ENCODE measurements at regions of chr6 and their contacts with region 1.

Region 1: DNA sequence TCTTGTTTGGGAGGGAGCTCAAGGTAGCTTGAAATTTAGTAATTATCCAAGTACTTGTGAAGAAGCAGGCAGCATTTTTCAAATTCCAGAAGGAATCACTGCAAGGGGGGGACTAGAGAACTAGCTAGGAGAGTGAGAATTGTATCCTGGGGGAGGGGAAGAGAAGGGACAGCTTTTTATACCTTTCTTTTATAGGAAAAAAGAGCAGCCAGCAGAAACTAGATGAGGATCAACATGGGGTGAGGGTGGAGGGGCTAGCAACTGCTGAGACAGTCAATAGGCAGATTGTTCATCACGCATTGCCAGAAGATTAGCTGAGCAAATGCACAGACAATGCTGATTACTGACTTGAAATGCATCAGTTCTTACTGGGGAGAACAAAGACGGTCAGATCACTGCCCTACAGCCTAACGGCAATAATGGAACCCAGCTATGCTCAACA is 514.3 kb upstream of the CITED2 start:
- DNase-seq: no peak
- H3K4me3 ChIP-seq: no peak overlapping the region
- H3K4me3 Mint-ChIP-seq: peak overlapping the region; percentile 12
- H3K27ac Mint-ChIP-seq: peak overlapping the region; percentile 6
- H3K4me1 ChIP-seq: peaks cover 35% of the 10 kb centered on the region
- H3K4me1 Mint-ChIP-seq: peaks cover 14% of the 10 kb centered on the region
- H3K27me3 ChIP-seq: no peaks in the 10 kb centered on the region
- H3K27me3 Mint-ChIP-seq: no peaks in the 10 kb centered on the region
- CTCF ChIP-seq: no peak

Region 2: DNA sequence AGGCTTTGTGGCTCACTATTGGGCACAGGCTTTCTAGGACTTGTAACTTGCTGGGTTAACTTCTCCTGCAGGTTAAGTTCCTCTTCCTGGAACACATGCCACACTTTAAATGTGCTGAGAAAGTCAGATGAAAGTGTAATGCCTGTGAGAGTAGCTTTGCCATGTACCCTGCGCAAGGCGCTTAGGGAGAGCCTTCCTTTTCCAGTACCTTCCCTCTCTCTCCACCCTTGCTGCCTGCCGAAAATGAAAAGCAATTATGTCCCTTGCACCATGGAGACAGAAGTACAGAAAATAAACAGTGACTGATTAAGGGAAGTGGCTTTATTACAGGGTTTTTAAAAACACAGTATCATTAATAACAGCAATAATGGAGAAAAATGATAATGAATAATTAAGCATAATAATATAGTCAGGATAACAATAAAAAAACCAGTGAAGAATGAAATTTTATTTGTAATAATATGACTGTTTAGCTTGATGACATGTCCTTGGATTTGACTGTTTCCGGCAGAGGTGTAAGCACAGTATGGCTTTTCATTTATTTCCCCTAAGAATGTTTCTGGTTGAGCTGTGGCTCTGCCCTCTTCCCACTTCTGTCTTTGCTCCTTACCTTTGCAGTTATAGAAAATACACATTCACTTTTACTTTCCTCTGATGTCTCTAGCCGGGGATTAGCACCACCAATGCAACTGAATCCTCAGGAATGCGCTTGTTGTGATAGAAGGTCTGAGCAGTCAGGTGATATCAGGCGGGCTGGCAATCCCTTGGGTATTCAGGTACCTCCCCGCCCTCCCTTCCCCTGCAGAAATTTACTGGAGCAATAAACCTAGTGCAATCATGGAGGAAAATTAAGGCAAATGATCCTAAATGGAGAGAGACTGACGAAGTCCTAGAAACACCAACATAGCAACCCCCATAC is 41.9 kb before region 1 on chr6:
- CTCF ChIA-PET with region 1: no interaction called
- POLR2A ChIA-PET with region 1: no interaction called
- intact Hi-C with region 1: no loop called
- DNase-seq: peak; percentile 62 to 65
- H3K4me3 ChIP-seq: no peak overlapping the region
- H3K4me3 Mint-ChIP-seq: peak overlapping the region; percentile 8
- H3K27ac Mint-ChIP-seq: peak overlapping the region; percentile 29
- H3K4me1 ChIP-seq: peaks cover 27% of the 10 kb centered on the region
- H3K4me1 Mint-ChIP-seq: peaks cover 20% of the 10 kb centered on the region
- H3K27me3 ChIP-seq: no peaks in the 10 kb centered on the region
- H3K27me3 Mint-ChIP-seq: no peaks in the 10 kb centered on the region
- CTCF ChIP-seq: no peak

Region 3: GRCh38 chr6:139863346-139863745 is 25.4 kb before region 1 on chr6:
- CTCF ChIA-PET with region 1: no interaction called
- POLR2A ChIA-PET with region 1: no interaction called
- intact Hi-C with region 1: loop called (anchors 1 kb)
- DNase-seq: no peak
- H3K4me3 ChIP-seq: no peak overlapping the region
- H3K4me3 Mint-ChIP-seq: no peak overlapping the region
- H3K27ac Mint-ChIP-seq: no peak overlapping the region
- H3K4me1 ChIP-seq: peaks cover 6% of the 10 kb centered on the region
- H3K4me1 Mint-ChIP-seq: no peaks in the 10 kb centered on the region
- H3K27me3 ChIP-seq: no peaks in the 10 kb centered on the region
- H3K27me3 Mint-ChIP-seq: no peaks in the 10 kb centered on the region
- CTCF ChIP-seq: no peak

Region 4: GRCh38 chr6:139970591-139970991 is 81.9 kb after region 1 on chr6:
- CTCF ChIA-PET with region 1: no interaction called
- POLR2A ChIA-PET with region 1: no interaction called
- intact Hi-C with region 1: no loop called
- DNase-seq: no peak
- H3K4me3 ChIP-seq: no peak overlapping the region
- H3K4me3 Mint-ChIP-seq: no peak overlapping the region
- H3K27ac Mint-ChIP-seq: no peak overlapping the region
- H3K4me1 ChIP-seq: peaks cover 3% of the 10 kb centered on the region; the same call in 1 of the 2 replicates
- H3K4me1 Mint-ChIP-seq: peaks cover 8% of the 10 kb centered on the region
- H3K27me3 ChIP-seq: no peaks in the 10 kb centered on the region
- H3K27me3 Mint-ChIP-seq: no peaks in the 10 kb centered on the region
- CTCF ChIP-seq: no peak

Region 5: GRCh38 chr6:139981768-139982181 is 93.1 kb after region 1 on chr6:
- CTCF ChIA-PET with region 1: no interaction called
- POLR2A ChIA-PET with region 1: no interaction called
- intact Hi-C with region 1: loop called (anchors 5 kb)
- DNase-seq: peak; percentile 40 to 59
- H3K4me3 ChIP-seq: no peak overlapping the region
- H3K4me3 Mint-ChIP-seq: peak overlapping the region; percentile 23
- H3K27ac Mint-ChIP-seq: no peak overlapping the region
- H3K4me1 ChIP-seq: peaks cover 49% of the 10 kb centered on the region
- H3K4me1 Mint-ChIP-seq: peaks cover 65% of the 10 kb centered on the region
- H3K27me3 ChIP-seq: no peaks in the 10 kb centered on the region
- H3K27me3 Mint-ChIP-seq: no peaks in the 10 kb centered on the region
- CTCF ChIP-seq: no peak

Region 6: DNA sequence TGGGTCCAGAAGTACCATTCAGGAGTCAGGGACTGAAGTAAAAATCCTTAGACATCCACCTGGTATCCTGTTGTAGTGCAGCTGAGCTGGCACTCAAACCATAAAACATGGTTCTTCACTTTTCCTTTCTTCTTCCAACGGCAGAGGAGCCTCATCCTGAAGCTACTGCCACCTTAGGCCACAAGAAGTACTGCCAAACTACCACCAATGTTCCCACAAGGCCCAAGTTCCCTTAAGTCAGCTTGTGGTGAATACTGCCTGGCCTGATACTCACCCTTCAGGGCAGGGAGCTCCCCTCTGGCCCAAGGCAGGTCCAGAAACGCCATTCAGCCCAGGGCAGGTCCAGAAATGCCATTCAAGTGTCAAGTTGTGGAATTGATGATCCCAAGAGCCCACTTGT is 539.1 kb after region 1 on chr6:
- CTCF ChIA-PET with region 1: no interaction called
- POLR2A ChIA-PET with region 1: no interaction called
- intact Hi-C with region 1: no loop called
- DNase-seq: peak in 1 of 2 experiments; percentile 8
- H3K4me3 ChIP-seq: no peak overlapping the region
- H3K4me3 Mint-ChIP-seq: no peak overlapping the region
- H3K27ac Mint-ChIP-seq: no peak overlapping the region
- H3K4me1 ChIP-seq: no peaks in the 10 kb centered on the region
- H3K4me1 Mint-ChIP-seq: no peaks in the 10 kb centered on the region
- H3K27me3 ChIP-seq: no peaks in the 10 kb centered on the region
- H3K27me3 Mint-ChIP-seq: no peaks in the 10 kb centered on the region
- CTCF ChIP-seq: no peak